T-cell (primary cell): ENCODE measurements at regions of chr1 and their contacts with region 1.

Region 1: GRCh38 chr1:51667556-51667955 is 50.7 kb downstream of the OSBPL9 start:
- DNase-seq: no peak
- ATAC-seq: no peak
- H3K4me3 ChIP-seq: no peak overlapping the region
- H3K4me3 Mint-ChIP-seq: no peak overlapping the region
- H3K27ac ChIP-seq: no peak overlapping the region
- H3K27ac Mint-ChIP-seq: no peak overlapping the region
- H3K4me1 ChIP-seq: no peaks in the 10 kb centered on the region
- H3K4me1 Mint-ChIP-seq: peaks cover 2 to 24% (median 2%) of the 10 kb centered on the region in 3 donors
- H3K27me3 ChIP-seq: no peaks in the 10 kb centered on the region
- H3K27me3 Mint-ChIP-seq: no peaks in the 10 kb centered on the region

Region 2: DNA sequence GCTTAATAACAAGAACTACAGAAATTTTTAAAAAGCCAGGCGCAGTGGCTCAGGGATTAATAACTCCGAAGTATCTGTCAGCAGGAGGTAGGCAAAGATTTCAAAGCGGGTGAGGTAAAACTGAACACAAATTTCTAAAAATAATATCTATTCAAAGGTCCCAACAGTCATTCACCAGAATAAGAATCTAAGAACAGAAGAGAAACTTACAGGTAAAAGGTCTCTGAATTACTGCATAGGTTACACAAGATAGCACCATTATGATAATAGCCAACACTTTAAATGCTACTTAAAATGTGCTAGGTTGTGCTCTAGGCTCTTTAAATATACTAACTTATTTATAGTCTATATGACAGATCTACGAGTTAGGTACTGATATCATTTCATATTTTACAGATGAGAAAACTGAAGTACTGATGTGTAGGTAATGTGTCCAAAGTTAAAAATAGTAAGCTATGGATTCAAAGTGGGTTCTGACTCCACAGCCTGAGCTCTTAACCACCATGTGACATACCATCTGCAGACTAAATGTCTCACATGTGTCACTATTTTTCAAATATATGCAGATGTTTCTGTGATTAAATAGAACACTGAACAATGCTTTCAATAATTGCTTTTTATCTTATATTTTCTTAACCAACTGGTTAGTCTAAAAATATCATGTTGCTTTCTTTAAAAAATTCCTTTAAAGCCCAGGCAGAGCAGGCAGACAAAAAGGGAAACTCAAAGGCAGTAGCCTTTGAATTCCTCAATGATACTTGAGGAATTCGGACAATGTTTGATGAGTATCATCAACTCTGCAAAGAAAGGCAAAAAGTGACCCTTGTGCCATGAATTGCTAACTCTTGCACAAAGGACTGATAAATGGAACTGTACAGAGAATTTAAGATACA is 256.7 kb before region 1 on chr1:
- CTCF ChIA-PET with region 1: no interaction called
- POLR2A ChIA-PET with region 1: no interaction called
- DNase-seq: no peak
- ATAC-seq: no peak
- H3K4me3 ChIP-seq: no peak overlapping the region
- H3K4me3 Mint-ChIP-seq: no peak overlapping the region
- H3K27ac ChIP-seq: no peak overlapping the region
- H3K27ac Mint-ChIP-seq: no peak overlapping the region
- H3K4me1 ChIP-seq: no peaks in the 10 kb centered on the region
- H3K4me1 Mint-ChIP-seq: no peaks in the 10 kb centered on the region
- H3K27me3 ChIP-seq: no peaks in the 10 kb centered on the region
- H3K27me3 Mint-ChIP-seq: no peaks in the 10 kb centered on the region

Region 3: GRCh38 chr1:51656374-51656773 is 11.2 kb before region 1 on chr1:
- CTCF ChIA-PET with region 1: no interaction called
- POLR2A ChIA-PET with region 1: interaction called in 1 of 2 experiments, 17 read pairs
- DNase-seq: no peak
- ATAC-seq: no peak
- H3K4me3 ChIP-seq: no peak overlapping the region
- H3K4me3 Mint-ChIP-seq: no peak overlapping the region
- H3K27ac ChIP-seq: no peak overlapping the region
- H3K27ac Mint-ChIP-seq: no peak overlapping the region
- H3K4me1 ChIP-seq: no peaks in the 10 kb centered on the region
- H3K4me1 Mint-ChIP-seq: peaks cover 0 to 6% (median 3%) of the 10 kb centered on the region in 3 donors
- H3K27me3 ChIP-seq: no peaks in the 10 kb centered on the region
- H3K27me3 Mint-ChIP-seq: no peaks in the 10 kb centered on the region